ENCODE measurements at regions of chr16 and their contacts with region 1.

Region 1: GRCh38 chr16:28140788-28141618 is 70.8 kb downstream of the XPO6 start:
- DNase-seq: peak; percentile 61
- H3K4me3 Mint-ChIP-seq: peak overlapping the region; percentile 72
- H3K27ac Mint-ChIP-seq: peak overlapping the region; percentile 88
- H3K4me1 Mint-ChIP-seq: peaks cover 75% of the 10 kb centered on the region
- H3K27me3 Mint-ChIP-seq: no peaks in the 10 kb centered on the region

Region 2: DNA sequence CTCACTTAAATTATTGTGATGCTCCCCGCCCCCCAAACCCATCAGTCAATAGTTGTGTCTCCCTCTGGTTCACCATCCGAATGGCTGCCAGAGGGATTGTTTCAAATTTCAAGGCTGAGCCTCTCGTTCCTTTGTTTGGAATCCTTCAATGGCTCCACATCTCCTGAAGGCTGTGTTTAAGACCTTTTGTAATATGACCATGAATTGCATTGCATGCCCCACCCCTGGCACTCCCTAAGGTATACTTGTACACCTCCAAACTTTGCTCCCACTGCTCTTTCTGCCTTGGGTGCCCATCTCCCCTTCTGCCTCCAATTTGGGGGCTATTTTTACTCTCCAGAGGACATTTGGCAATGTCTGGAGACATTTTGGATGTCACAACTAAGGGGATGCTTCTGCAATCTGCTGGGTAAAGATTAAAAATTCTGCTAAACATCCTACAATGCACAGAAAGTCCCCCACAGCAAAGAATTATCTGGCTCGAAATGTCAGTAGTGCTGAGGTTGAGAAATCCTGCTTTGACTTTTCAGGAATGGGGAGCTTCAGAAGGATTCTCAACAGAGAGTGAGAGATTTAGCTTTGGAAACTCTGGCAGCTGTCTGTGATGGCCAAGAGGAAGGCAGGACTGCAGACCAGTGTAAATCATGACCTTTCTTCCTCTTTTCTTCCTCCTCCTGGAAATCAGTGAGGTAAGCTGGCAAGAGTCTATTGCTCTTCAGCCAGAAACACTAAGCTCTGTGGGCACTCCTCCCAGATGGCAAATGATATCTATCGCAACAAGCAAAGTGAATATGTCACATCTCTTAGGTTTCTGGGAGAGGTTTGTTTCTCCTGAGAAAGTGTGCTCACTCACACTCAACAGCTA is 835.9 kb before region 1 on chr16:
- intact Hi-C with region 1: no loop called
- DNase-seq: no peak
- H3K4me3 Mint-ChIP-seq: no peak overlapping the region
- H3K27ac Mint-ChIP-seq: no peak overlapping the region
- H3K4me1 Mint-ChIP-seq: peaks cover 26% of the 10 kb centered on the region
- H3K27me3 Mint-ChIP-seq: no peaks in the 10 kb centered on the region

Region 3: DNA sequence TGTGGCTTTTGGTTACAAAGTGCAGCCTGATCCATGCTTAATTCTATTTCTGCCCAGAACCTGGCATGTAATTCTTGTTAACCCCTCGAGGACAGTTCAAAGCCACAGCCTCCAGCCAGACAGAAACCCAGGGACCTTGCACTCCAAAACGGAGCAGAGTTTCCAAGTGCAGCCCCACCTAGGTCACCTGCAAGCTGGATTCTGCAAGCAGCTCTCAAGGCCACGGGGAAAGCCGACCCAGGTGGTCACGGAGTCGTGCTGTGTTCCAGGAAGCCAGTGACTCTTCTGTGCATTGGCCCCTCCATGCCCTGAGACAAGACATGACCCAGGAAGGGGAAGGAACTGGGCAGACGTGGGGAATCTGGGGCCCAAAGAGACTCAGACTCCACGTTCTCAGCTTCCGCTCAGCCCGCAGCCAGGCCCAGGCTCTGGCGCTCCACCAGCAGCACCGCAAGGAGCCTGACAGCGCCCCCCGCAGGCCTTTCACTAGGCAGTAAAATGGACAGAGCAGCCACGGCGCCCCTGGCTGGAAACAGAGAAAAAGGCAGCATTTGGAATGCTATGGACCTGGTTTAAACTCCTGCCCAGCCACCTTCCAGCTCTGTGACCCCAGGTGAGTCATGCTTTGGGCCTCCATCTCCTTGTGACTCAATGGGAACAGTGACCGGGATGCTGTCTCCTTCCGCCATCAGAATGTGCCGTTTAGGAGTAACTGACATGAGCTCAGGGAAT is 50.2 kb before region 1 on chr16:
- intact Hi-C with region 1: no loop called
- DNase-seq: no peak
- H3K4me3 Mint-ChIP-seq: no peak overlapping the region
- H3K27ac Mint-ChIP-seq: no peak overlapping the region
- H3K4me1 Mint-ChIP-seq: no peaks in the 10 kb centered on the region
- H3K27me3 Mint-ChIP-seq: no peaks in the 10 kb centered on the region

Region 4: DNA sequence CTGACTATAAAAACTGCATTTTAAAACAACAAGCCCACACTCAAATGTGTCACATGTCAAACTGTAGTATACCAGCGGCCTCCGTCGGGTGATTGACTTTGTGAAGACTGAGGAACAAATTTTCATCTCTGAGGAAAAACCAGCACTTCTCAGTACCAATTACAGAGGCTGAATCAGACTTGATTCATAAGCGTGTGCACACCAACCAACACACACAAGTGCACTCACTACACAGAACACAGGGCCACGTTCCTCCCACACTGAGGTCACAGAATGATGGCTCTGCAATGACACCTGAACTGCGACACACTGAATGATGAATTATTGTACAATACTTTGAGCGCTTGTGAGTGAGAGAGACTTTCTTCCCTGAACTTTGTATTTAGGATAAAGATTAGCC is 41.2 kb after region 1 on chr16:
- intact Hi-C with region 1: loop called (anchors 1 kb)
- DNase-seq: no peak
- H3K4me3 Mint-ChIP-seq: peak overlapping the region; percentile 49
- H3K27ac Mint-ChIP-seq: peak overlapping the region; percentile 95
- H3K4me1 Mint-ChIP-seq: peaks cover 69% of the 10 kb centered on the region
- H3K27me3 Mint-ChIP-seq: no peaks in the 10 kb centered on the region

Region 5: DNA sequence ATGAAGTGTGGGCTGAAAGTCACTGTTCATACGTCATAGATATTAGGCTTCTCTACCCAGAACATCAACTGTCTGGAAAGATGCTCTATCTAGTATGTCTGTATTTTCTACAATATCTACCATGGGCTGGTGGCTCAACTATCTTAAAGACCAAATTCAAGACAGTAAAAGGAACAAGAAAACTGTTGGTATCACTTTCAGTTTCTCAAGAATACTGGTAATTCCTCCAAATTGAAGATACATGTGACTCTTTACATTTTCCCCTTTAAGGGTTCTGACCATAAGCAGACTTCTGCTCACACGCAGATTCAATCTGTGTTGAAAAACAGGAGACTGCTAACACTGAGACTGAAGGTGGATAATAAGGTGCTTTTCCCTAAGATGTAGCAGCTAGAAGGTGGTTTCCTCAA is 46.6 kb after region 1 on chr16:
- intact Hi-C with region 1: loop called (anchors 1 kb)
- DNase-seq: no peak
- H3K4me3 Mint-ChIP-seq: peak overlapping the region; percentile 30
- H3K27ac Mint-ChIP-seq: peak overlapping the region; percentile 91
- H3K4me1 Mint-ChIP-seq: peaks cover 83% of the 10 kb centered on the region
- H3K27me3 Mint-ChIP-seq: no peaks in the 10 kb centered on the region

Region 6: DNA sequence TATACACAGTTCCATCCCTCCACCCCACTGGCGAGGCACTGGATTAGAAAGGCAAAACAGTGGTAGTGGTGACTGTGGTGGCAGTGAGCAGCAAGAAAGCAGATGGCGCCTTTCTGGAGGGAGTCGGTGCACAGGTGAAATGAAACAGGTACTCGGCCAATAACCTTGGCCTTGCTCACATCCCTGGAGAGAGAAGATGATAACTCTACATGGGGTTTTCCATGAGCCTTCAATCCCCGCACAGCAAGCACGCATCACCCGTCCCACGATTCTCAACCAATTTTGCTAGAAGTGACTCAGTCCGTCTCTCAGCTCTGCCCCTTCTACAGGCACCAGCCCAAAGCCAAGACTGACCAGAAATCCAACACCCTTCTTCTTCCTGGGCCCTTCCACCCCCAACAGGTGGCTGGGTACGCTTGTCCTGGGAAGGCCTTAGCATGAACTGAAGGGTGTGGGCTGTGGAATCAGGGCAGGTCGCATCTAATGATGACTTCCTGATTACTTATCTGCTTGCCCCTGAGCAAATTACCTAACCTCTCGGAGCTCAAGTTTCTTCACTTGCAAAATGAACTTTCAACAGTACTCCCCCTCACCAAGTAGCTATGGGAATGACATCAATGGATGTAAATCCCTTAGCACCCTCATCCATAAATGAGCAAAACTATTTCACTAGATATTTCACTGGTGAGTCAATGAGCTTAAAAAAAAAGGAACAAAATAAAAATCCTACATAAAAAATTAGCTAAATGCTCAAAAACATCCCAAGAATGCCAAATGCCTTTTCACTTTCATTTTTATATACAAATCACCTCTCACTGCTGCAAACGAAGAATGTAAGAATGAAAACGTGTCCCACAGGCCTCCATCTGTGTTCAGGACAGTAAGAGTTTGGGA is 52.8 kb after region 1 on chr16:
- intact Hi-C with region 1: loop called (anchors 1 kb)
- DNase-seq: peak; percentile 26
- H3K4me3 Mint-ChIP-seq: peak overlapping the region; percentile 76
- H3K27ac Mint-ChIP-seq: peak overlapping the region; percentile 94
- H3K4me1 Mint-ChIP-seq: peaks cover 75% of the 10 kb centered on the region
- H3K27me3 Mint-ChIP-seq: no peaks in the 10 kb centered on the region

Region 7: DNA sequence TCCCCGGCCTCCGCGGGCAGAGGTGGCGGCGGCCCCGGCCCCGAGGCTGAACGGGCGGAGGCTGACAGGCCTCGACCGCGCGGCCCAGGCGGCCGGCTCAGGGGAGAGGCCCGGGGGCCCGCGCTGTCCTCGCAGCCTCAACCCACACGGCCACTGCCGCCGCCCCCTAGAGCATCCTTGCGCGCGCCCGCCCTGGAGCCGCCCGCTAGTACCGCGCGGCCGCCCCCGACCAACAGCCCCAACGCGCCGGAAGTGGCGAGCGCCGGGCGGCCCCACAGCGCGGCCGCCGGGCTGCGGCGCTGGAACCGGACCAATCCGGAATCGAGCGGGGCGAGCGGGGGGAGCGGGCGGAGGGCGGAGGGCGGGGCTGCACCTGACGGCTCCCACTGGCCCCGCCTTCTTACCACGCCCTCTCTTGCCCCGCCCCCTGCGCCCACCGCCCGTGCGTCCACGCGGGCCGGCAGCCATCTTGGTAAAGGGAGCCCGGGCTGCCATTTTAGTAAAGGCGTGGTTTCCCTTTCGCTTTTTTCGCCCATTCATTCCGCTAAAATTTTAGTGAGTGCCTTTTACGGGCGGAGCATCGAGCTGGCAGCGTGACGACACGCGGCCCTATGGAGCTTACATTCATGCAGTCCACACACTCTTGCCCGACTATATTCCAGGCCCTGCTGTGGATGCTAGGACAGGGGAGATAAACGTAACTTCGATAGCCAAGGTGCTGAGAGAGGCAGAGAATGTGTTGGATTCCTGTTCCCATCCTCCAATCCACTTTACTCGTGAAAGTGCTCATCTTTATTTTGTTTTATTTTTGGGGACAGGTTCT is 70.9 kb after region 1 on chr16 and contains the start of gene XPO6:
- intact Hi-C with region 1: loop called (anchors 2 kb)
- DNase-seq: peak; percentile 97
- H3K4me3 Mint-ChIP-seq: peak within 1 kb of the TSS; percentile 87
- H3K27ac Mint-ChIP-seq: peak within 1 kb of the TSS; percentile 99
- H3K4me1 Mint-ChIP-seq: peaks cover 20% of the 10 kb centered on the region
- H3K27me3 Mint-ChIP-seq: no peaks in the 10 kb centered on the region
- total RNA-seq, gene XPO6: 227 and 230 TPM in 2 replicates

Region 8: DNA sequence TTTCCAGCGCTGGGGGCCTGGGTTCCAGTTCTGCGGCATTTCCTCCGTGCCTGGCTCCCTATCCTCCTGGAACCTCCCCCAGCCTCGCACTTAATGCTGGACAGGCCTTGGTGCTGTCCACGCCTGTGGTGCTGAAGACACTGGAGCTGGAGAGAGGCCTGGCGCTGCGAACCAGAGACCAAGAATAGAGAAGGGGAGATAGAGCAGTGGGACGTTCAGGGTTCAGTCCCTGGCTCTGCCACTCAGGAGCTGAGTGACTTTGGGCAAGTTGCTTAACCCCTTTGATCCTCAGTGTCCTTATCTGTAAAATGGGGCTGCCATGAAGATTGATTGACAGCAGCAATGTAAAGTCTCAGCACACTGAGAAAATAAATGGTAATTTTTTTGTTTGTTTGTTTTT is 163.2 kb after region 1 on chr16:
- intact Hi-C with region 1: loop called (anchors 5 kb)
- DNase-seq: no peak
- H3K4me3 Mint-ChIP-seq: no peak overlapping the region
- H3K27ac Mint-ChIP-seq: no peak overlapping the region
- H3K4me1 Mint-ChIP-seq: peaks cover 3% of the 10 kb centered on the region
- H3K27me3 Mint-ChIP-seq: no peaks in the 10 kb centered on the region